Body of pancreas (tissue), 4 donors: ENCODE measurements at regions of chr5 and their contacts with region 1.

Region 1: GRCh38 chr5:113005454-113005853 is 28.9 kb downstream of the DCP2 start:
- DNase-seq: no peak
- ATAC-seq: no peak
- H3K4me3 ChIP-seq: no peak overlapping the region
- H3K27ac ChIP-seq: no peak overlapping the region
- H3K4me1 ChIP-seq: no peaks in the 10 kb centered on the region
- H3K27me3 ChIP-seq: no peaks in the 10 kb centered on the region
- CTCF ChIP-seq: no peak
- POLR2A ChIP-seq: no peak

Region 2: GRCh38 chr5:113606298-113607134 is 601.1 kb after region 1 on chr5:
- intact Hi-C with region 1: loop called (anchors 10 kb)
- DNase-seq: peak; percentile 29 to 66 (median 36)
- ATAC-seq: peak; percentile 63
- H3K4me3 ChIP-seq: no peak overlapping the region
- H3K27ac ChIP-seq: no peak overlapping the region
- H3K4me1 ChIP-seq: no peaks in the 10 kb centered on the region
- H3K27me3 ChIP-seq: no peaks in the 10 kb centered on the region
- CTCF ChIP-seq: peak; percentile 47 to 84 (median 71)
- POLR2A ChIP-seq: no peak